Gastrocnemius medialis (tissue), 4 donors: ENCODE measurements at regions of chr2 and their contacts with region 1.

Region 1: GRCh38 chr2:216412022-216412999 is at the start of gene SMARCAL1:
- DNase-seq: peak; percentile 98 to 99
- ATAC-seq: peak; percentile 96 to 97
- H3K4me3 ChIP-seq: peak within 1 kb of the TSS; percentile 91 to 98 (median 92)
- H3K27ac ChIP-seq: peak within 1 kb of the TSS; percentile 97 to 100 (median 98)
- H3K4me1 ChIP-seq: peaks cover 9 to 10% of the 10 kb centered on the region in 2 donors
- H3K27me3 ChIP-seq: no peaks in the 10 kb centered on the region
- CTCF ChIP-seq: no peak
- POLR2A ChIP-seq: peak; percentile 26 to 33
- total RNA-seq, gene SMARCAL1: 5.8 to 20.7 (median 7.8) TPM

Region 2: DNA sequence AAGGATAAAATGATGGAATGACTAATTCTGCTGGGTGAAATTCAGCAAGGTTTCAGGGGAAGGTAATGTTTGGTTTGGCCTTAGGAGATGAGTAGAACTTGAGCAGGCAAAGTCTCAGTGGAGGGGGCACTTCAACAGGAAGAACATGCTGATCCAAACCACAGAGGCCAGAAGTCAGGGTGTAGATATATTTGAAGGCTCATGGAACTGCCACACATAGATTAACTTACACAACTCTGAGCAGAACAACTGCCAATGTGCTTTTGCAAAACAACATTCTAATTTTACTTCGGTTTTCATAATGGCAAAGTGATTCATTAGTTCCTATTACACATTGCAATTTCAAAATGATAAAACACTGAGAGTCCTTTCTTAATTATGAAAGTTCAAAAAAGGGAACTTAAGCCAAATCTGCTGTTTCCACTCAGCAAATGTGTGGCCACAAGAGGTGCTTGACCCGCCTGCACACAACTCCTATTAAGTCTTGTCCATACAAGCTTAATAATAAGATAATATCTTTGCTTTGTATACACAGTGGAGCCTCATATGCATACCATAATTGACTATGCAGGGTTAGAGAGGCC is 683.7 kb before region 1 on chr2:
- in situ Hi-C with region 1: no loop called
- intact Hi-C with region 1: no loop called
- DNase-seq: peak in 1 of 2 donors; percentile 16
- ATAC-seq: peak; percentile 39 to 51
- H3K4me3 ChIP-seq: no peak overlapping the region
- H3K27ac ChIP-seq: no peak overlapping the region
- H3K4me1 ChIP-seq: no peaks in the 10 kb centered on the region
- H3K27me3 ChIP-seq: no peaks in the 10 kb centered on the region
- CTCF ChIP-seq: no peak
- POLR2A ChIP-seq: no peak

Region 3: GRCh38 chr2:216114714-216115557 is 297.4 kb before region 1 on chr2:
- in situ Hi-C with region 1: loop called (anchors 10 to 25 kb)
- intact Hi-C with region 1: loop called (anchors 2 kb)
- DNase-seq: peak; percentile 96 to 98
- ATAC-seq: peak; percentile 100
- H3K4me3 ChIP-seq: peak overlapping the region; percentile 56 to 71 (median 64)
- H3K27ac ChIP-seq: peak overlapping the region; percentile 78 to 87 (median 84)
- H3K4me1 ChIP-seq: peaks cover 22 to 34% of the 10 kb centered on the region in 2 donors
- H3K27me3 ChIP-seq: no peaks in the 10 kb centered on the region
- CTCF ChIP-seq: peak; percentile 85 to 87 (median 86)
- POLR2A ChIP-seq: peak in 1 of 2 donors; percentile 37

Region 4: DNA sequence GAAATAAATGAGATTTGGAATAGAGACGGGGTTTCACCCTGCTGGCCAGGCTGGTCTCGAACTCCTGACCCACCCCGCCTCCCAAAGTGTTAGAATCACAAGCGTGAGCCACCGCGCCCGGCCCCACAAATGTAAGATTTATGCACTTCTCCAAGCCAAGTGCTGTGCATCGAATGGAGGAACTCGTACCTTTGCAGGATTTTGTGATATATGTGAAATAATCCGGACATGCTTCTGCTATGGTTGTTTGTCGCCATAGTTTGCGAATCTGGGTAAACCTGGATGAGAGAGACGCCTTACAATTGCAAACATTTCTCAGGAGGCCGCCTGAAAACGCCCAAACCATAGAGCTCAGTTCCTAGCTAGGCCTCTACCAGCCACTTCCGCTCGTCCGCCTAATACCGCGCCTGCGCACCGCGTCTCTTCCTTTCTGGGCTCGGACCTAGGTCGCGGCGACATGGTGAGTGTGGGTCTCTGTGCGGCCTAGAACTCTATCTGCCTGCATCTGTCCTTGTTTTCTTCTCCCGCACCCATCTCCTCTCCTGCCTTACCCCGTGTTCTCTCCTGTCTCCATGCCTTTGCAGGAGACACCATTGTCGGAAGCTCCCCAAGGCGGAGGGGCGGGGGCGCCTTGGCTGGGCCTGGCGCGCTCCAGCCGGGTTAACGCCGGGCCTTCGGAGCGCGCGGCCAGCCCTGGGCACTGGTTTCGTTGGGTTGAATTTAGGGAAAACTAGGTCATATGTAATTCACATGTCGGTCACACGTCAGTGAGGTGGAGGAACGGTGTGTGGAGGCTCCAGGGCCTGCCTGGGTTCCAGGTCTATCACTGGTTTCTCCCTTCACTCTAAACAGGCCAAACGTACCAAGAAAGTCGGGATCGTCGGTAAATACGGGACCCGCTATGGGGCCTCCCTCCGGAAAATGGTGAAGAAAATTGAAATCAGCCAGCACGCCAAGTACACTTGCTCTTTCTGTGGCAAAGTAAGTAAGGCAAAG is 86.4 kb after region 1 on chr2 and contains the start of gene RPL37A:
- in situ Hi-C with region 1: no loop called
- intact Hi-C with region 1: loop called (anchors 1 kb)
- DNase-seq: peak; percentile 87 to 91
- ATAC-seq: peak; percentile 97 to 98
- H3K4me3 ChIP-seq: peak within 1 kb of the TSS; percentile 70 to 90 (median 80)
- H3K27ac ChIP-seq: peak within 1 kb of the TSS; percentile 81 to 89 (median 84)
- H3K4me1 ChIP-seq: peaks cover 26% of the 10 kb centered on the region in 2 donors
- H3K27me3 ChIP-seq: no peaks in the 10 kb centered on the region
- CTCF ChIP-seq: peak in 1 of 5 experiments; percentile 17
- POLR2A ChIP-seq: peak; percentile 93 to 94
- total RNA-seq, gene RPL37A: 1,065 to 1,506 (median 1,390) TPM

Region 5: GRCh38 chr2:216596236-216596979 is 184.1 kb after region 1 on chr2:
- in situ Hi-C with region 1: no loop called
- intact Hi-C with region 1: no loop called
- DNase-seq: no peak
- ATAC-seq: peak in 1 of 2 donors; percentile 19
- H3K4me3 ChIP-seq: no peak overlapping the region
- H3K27ac ChIP-seq: no peak overlapping the region
- H3K4me1 ChIP-seq: peaks cover 7 to 8% of the 10 kb centered on the region in 2 donors
- H3K27me3 ChIP-seq: no peaks in the 10 kb centered on the region
- CTCF ChIP-seq: no peak
- POLR2A ChIP-seq: no peak